Activated CD4-positive, alpha-beta memory T cell treated with anti-CD3 and anti-CD28 coated beads for 36 hours (primary cell): ENCODE measurements at regions of chr12 and their contacts with region 1.

Region 1: DNA sequence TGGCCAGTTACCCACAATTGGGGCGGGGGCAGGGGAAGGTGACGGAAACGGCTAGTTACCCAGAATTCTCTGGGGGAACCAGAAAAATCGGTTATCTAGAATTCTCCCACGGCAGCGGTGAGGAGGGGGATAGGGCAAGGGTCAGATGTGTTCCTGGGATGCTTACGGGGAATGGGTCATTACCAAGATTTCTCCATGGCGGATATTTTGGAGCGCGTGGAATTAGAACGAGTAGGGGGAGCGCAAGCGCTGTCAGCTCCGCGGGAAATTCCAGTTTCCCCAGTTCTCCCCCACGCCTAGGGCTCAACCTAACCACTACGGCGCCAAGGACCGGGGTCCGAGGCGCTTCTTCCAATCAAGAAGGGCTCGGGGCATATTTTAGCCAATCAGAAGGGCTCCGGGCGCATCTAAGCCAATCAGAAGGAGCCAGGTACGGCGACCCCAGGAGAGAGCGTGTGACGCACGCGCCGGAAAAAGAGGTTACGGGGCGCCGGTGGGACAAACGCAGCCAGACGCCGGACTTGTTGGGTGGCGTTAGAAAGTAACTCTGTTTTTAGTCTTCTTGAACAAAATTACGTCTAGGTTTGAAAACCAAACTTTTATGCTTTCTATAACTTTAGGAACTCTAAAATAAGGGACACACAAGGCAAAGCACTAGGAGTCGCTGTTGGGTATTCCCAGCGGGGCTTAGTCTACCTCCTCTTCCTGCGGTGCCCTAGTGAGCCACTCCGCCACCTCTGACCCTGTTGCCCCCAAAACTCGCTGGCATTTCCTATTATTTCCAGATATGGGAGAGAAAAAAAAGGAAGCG is at the start of gene PAN2:
- DNase-seq: peak; percentile 97
- H3K4me3 Mint-ChIP-seq: peak within 1 kb of the TSS; percentile 94
- H3K27ac Mint-ChIP-seq: peak within 1 kb of the TSS; percentile 99
- H3K4me1 Mint-ChIP-seq: peaks cover 43% of the 10 kb centered on the region
- H3K27me3 Mint-ChIP-seq: no peaks in the 10 kb centered on the region
- total RNA-seq, gene PAN2: 49.0 to 51.2 TPM

Region 2: GRCh38 chr12:56104109-56104814 is 229.6 kb before region 1 on chr12 and contains the start of gene PA2G4:
- CTCF ChIA-PET with region 1: no interaction called
- POLR2A ChIA-PET with region 1: no interaction called
- intact Hi-C with region 1: no loop called
- DNase-seq: peak; percentile 99
- H3K4me3 Mint-ChIP-seq: peak within 1 kb of the TSS; percentile 100
- H3K27ac Mint-ChIP-seq: peak within 1 kb of the TSS; percentile 97
- H3K4me1 Mint-ChIP-seq: peaks cover 34% of the 10 kb centered on the region
- H3K27me3 Mint-ChIP-seq: no peaks in the 10 kb centered on the region
- total RNA-seq, gene PA2G4: 399 to 410 TPM

Region 3: GRCh38 chr12:56158029-56158925 is 175.6 kb before region 1 on chr12 and contains the start of gene MYL6:
- CTCF ChIA-PET with region 1: no interaction called
- POLR2A ChIA-PET with region 1: no interaction called
- intact Hi-C with region 1: loop called (anchors 1 kb)
- DNase-seq: peak; percentile 95
- H3K4me3 Mint-ChIP-seq: peak within 1 kb of the TSS; percentile 95
- H3K27ac Mint-ChIP-seq: peak within 1 kb of the TSS; percentile 98
- H3K4me1 Mint-ChIP-seq: peaks cover 42% of the 10 kb centered on the region
- H3K27me3 Mint-ChIP-seq: no peaks in the 10 kb centered on the region
- total RNA-seq, gene MYL6: 1,196 to 1,215 TPM